ENCODE measurements at regions of chr1 and their contacts with region 1.

Region 1: GRCh38 chr1:198756470-198756869 is 117.6 kb downstream of the PTPRC start:
- DNase-seq: no peak
- H3K4me3 ChIP-seq: no peak overlapping the region
- H3K27ac ChIP-seq: no peak overlapping the region
- H3K4me1 ChIP-seq: no peaks in the 10 kb centered on the region
- H3K27me3 ChIP-seq: no peaks in the 10 kb centered on the region
- CTCF ChIP-seq: peak in 4 of 6 experiments; percentile 38 to 54 (median 48)
- POLR2A ChIP-seq: no peak

Region 2: DNA sequence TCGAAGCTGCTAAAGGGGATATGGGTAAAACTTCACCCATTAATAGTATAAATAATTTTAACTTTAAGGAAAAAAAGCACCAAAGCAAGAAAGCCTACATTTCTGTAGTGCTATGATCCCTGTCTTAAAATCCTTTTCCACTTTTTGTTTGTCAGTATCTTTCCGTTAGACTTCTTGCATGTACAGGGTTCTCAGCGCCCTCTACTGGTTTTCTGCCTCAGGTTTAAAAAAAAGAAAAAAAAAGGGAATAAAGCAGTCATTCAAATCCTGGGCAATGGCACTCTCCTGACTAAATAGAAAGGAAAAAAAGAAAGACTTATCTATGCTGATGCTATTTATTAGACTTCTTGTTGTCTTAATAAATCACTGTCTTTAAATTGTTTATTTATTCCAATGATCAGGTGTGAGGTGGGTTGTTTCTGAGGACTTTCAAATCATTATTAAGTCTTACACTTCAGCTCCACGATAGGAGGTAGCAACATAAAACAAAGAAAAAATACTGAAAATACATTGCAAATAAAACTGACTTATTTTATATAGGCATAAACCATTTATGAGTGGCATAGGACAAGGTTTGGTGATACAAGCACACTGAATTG is 795.6 kb after region 1 on chr1:
- intact Hi-C with region 1: loop called in 1 of 2 experiments (anchors 10 kb)
- DNase-seq: peak; percentile 24 to 56 (median 42)
- H3K4me3 ChIP-seq: no peak overlapping the region
- H3K27ac ChIP-seq: no peak overlapping the region
- H3K4me1 ChIP-seq: no peaks in the 10 kb centered on the region
- H3K27me3 ChIP-seq: no peaks in the 10 kb centered on the region
- CTCF ChIP-seq: peak; percentile 37 to 73 (median 54)
- POLR2A ChIP-seq: no peak

Measured in adrenal gland (tissue), 19 donors.